Dendritic cell treated with granulocyte-macrophage colony-stimulating factor and Interleukin-4, amounts not matched to agents 40 ng/mL and 50 ng/mL, for 4 days (primary cell): ENCODE measurements at regions of chr13 and their contacts with region 1.

Region 1: GRCh38 chr13:23375001-23375971 is 58.2 kb downstream of the SACS start:
- H3K4me3 Mint-ChIP-seq: peak overlapping the region; percentile 73
- H3K27ac Mint-ChIP-seq: peak overlapping the region; percentile 55
- H3K4me1 Mint-ChIP-seq: peaks cover 52% of the 10 kb centered on the region
- H3K27me3 Mint-ChIP-seq: peaks cover 11% of the 10 kb centered on the region

Region 2: GRCh38 chr13:22114630-22115311 is 1260.5 kb before region 1 on chr13:
- intact Hi-C with region 1: loop called (anchors 10 kb)
- H3K4me3 Mint-ChIP-seq: peak overlapping the region; percentile 34
- H3K27ac Mint-ChIP-seq: peak overlapping the region; percentile 96
- H3K4me1 Mint-ChIP-seq: peaks cover 33% of the 10 kb centered on the region
- H3K27me3 Mint-ChIP-seq: peaks cover 52% of the 10 kb centered on the region

Region 3: DNA sequence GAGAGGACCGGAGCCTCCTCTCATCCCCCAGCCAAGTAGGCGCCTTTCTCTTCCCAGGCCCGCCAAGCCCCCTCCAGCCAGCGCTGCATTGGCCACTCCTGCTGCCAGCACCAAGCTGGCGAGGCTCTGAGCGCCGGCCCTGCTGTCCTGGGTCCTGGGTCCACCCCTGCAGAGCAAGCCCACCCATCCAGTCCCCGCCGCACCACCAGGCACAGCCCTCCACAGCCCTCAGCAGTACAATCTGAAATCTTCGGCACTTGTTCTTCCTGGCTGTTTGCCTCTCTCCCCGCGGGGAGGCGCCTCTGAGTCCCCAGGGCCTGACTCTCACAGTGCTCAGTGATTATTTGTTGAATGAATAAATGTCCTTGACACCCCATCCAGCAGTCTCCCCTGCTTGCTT is 430.9 kb before region 1 on chr13:
- intact Hi-C with region 1: no loop called
- H3K4me3 Mint-ChIP-seq: no peak overlapping the region
- H3K27ac Mint-ChIP-seq: no peak overlapping the region
- H3K4me1 Mint-ChIP-seq: no peaks in the 10 kb centered on the region
- H3K27me3 Mint-ChIP-seq: no peaks in the 10 kb centered on the region

Region 4: GRCh38 chr13:23579072-23579895 is 204.0 kb after region 1 on chr13:
- intact Hi-C with region 1: loop called (anchors 1 kb)
- H3K4me3 Mint-ChIP-seq: peak overlapping the region; percentile 80
- H3K27ac Mint-ChIP-seq: peak overlapping the region; percentile 70
- H3K4me1 Mint-ChIP-seq: no peaks in the 10 kb centered on the region
- H3K27me3 Mint-ChIP-seq: peaks cover 52% of the 10 kb centered on the region

Region 5: DNA sequence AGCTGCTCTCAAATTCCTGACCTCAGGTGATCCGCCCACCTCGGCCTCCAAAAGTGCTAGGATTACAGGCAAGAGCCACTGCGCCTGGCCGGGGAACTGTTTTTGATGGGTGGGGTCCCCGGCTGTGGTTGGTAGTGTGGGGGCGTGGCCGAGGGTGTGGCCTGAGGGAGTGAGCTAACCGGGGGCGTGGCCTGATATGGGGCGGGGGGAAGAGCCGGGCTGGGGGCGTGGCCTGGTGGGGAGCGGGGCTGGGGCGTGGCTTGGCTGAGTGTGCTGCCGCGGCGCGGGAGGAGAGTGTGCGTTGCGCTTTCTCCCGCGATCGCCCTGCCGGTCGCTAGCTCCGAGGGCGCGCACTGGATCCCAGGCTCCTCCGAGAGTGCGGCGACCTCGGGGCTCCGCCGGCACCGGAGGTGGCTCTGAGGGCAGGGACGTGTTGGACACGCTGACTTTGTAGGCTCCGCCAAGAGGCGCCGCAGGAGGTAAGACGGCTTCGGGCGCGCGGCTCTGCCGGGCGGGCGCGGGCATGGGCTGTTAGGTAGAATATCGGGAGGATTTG is 785.2 kb after region 1 on chr13 and contains the start of gene SPATA13:
- intact Hi-C with region 1: loop called (anchors 10 kb)
- H3K4me3 Mint-ChIP-seq: peak within 1 kb of the TSS; percentile 91
- H3K27ac Mint-ChIP-seq: peak within 1 kb of the TSS; percentile 82
- H3K4me1 Mint-ChIP-seq: peaks cover 18% of the 10 kb centered on the region
- H3K27me3 Mint-ChIP-seq: peaks cover 26% of the 10 kb centered on the region